Pancreas (tissue), 10 donors: ENCODE measurements at regions of chr4 and their contacts with region 1.

Region 1: GRCh38 chr4:7802093-7802726 is 137.5 kb downstream of the AFAP1 start:
- DNase-seq: peak in 4 of 6 donors; percentile 49 to 82 (median 70)
- ATAC-seq: peak; percentile 30 to 76 (median 76)
- H3K4me3 ChIP-seq: no peak overlapping the region
- H3K27ac ChIP-seq: no peak overlapping the region
- H3K4me1 ChIP-seq: peaks cover 5 to 21% (median 14%) of the 10 kb centered on the region in 3 donors
- H3K27me3 ChIP-seq: no peaks in the 10 kb centered on the region
- CTCF ChIP-seq: peak; percentile 74 to 86 (median 80)

Region 2: DNA sequence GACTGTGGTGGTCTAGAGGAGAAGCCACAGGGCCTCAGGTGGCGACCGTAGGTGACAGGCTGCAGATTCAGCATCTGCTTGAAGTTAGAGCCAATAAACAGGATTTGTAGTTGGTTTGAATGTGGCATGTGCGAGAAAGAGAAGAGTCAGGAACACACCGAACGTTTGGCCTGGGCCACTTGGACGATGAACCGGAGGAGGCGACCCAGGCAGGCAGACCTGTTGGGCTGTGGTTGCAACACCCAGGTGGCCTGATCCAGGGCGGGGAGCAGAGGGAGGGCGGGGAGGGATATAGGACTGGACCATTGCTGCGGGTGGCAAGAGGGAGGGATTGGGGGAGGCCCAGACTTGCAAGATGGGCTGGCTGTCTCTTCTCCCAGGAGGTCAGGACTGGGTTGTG is 357.5 kb before region 1 on chr4:
- intact Hi-C with region 1: no loop called
- DNase-seq: peak in 1 of 6 donors; percentile 25
- ATAC-seq: no peak
- H3K4me3 ChIP-seq: no peak overlapping the region
- H3K27ac ChIP-seq: no peak overlapping the region
- H3K4me1 ChIP-seq: no peaks in the 10 kb centered on the region
- H3K27me3 ChIP-seq: no peaks in the 10 kb centered on the region
- CTCF ChIP-seq: no peak

Region 3: GRCh38 chr4:7987148-7987989 is 185.2 kb after region 1 on chr4:
- intact Hi-C with region 1: loop called in 2 of 3 experiments (anchors 5 kb)
- DNase-seq: peak; percentile 51 to 83 (median 68)
- ATAC-seq: peak; percentile 72 to 96 (median 91)
- H3K4me3 ChIP-seq: no peak overlapping the region
- H3K27ac ChIP-seq: no peak overlapping the region
- H3K4me1 ChIP-seq: no peaks in the 10 kb centered on the region
- H3K27me3 ChIP-seq: no peaks in the 10 kb centered on the region
- CTCF ChIP-seq: peak; percentile 72 to 83 (median 82)

Region 4: DNA sequence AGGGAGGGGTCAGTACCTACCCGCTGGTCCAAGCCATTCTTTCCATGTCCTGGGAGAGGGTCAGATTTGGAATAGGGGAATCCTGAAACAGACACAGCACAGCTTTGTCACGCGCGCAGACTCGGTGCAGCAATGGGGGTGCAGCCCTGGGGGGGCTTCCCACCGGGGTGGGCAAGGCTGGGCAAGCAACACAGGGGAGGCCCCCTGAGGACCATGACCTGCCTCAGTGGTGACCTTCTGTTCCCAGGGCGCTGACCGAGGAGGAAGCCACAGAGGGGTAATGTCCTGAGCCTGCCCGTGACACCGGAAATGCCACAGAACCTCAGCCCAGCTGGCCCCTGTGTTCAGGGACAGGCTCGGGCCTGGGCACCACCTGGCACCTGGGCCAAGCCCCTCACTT is 190.6 kb after region 1 on chr4:
- intact Hi-C with region 1: loop called in 2 of 3 experiments (anchors 5 kb)
- DNase-seq: no peak
- ATAC-seq: no peak
- H3K4me3 ChIP-seq: no peak overlapping the region
- H3K27ac ChIP-seq: no peak overlapping the region
- H3K4me1 ChIP-seq: no peaks in the 10 kb centered on the region
- H3K27me3 ChIP-seq: no peaks in the 10 kb centered on the region
- CTCF ChIP-seq: no peak